PC-9 (cell line): ENCODE measurements at regions of chr18 and their contacts with region 1.

Region 1: GRCh38 chr18:70421471-70422390 is 132.9 kb downstream of the SOCS6 start:
- DNase-seq: peak; percentile 82 to 97
- H3K4me3 ChIP-seq: peak overlapping the region; percentile 45; the same call in 1 of the 2 replicates
- H3K27ac ChIP-seq: peak overlapping the region; percentile 99
- H3K4me1 ChIP-seq: peaks cover 68% of the 10 kb centered on the region
- H3K27me3 ChIP-seq: no peaks in the 10 kb centered on the region
- CTCF ChIP-seq: no peak

Region 2: DNA sequence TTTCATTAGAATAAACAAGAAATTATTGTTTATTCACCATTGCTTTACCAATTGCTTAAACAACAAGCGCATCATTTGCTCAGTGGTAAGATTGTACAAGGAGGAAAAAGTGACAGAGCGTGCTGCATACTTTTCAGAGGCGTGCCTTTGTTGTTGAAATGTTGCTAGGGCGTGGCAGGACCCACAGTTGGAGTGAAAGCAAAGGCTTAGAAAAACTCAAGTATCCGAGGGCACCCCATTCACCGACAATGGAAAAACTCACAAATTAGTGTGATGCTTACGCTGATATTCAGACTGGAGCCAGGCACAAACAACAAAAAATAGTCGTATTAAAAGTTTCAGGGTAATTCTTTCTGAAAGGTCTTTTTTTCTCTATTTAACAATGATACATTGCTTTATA is 178.6 kb before region 1 on chr18:
- CTCF ChIA-PET with region 1: no interaction called
- POLR2A ChIA-PET with region 1: no interaction called
- intact Hi-C with region 1: loop called (anchors 1 kb)
- DNase-seq: peak; percentile 65 to 89
- H3K4me3 ChIP-seq: peak overlapping the region; percentile 47
- H3K27ac ChIP-seq: peak overlapping the region; percentile 97
- H3K4me1 ChIP-seq: peaks cover 21% of the 10 kb centered on the region
- H3K27me3 ChIP-seq: no peaks in the 10 kb centered on the region
- CTCF ChIP-seq: no peak

Region 3: DNA sequence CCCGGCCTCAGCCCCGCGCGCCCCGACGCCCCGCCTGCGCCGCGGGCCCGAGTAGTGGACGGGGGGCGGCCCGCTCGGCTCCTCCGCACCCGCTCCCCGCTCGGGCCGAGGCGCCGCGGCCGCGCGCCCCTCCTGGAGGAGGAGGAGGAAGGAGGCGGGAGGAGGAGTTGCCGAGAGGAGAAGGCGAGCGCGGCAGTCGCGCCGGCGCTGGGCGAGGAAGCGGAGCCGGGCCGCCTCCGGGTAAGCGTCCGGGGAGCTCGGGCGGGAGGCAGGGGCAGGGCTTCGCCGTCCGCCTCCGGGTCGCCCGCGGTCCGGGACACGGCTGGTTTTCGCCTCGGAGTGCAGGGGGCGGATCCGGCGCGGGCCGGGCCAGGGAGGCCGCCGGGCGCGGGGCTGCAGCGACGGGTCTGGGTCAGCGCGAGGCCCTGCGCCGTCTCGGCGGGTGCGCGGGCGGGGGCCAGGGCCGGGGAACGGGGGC is 132.8 kb before region 1 on chr18 and contains the start of gene SOCS6:
- CTCF ChIA-PET with region 1: no interaction called
- POLR2A ChIA-PET with region 1: interaction called, 3 read pairs
- intact Hi-C with region 1: loop called (anchors 5 kb)
- DNase-seq: peak; percentile 53 to 58
- H3K4me3 ChIP-seq: peak within 1 kb of the TSS; percentile 94
- H3K27ac ChIP-seq: peak within 1 kb of the TSS; percentile 61
- H3K4me1 ChIP-seq: peaks cover 45% of the 10 kb centered on the region
- H3K27me3 ChIP-seq: no peaks in the 10 kb centered on the region
- CTCF ChIP-seq: no peak
- total RNA-seq, gene SOCS6: 20.9 and 21.0 TPM in 2 replicates

Region 4: DNA sequence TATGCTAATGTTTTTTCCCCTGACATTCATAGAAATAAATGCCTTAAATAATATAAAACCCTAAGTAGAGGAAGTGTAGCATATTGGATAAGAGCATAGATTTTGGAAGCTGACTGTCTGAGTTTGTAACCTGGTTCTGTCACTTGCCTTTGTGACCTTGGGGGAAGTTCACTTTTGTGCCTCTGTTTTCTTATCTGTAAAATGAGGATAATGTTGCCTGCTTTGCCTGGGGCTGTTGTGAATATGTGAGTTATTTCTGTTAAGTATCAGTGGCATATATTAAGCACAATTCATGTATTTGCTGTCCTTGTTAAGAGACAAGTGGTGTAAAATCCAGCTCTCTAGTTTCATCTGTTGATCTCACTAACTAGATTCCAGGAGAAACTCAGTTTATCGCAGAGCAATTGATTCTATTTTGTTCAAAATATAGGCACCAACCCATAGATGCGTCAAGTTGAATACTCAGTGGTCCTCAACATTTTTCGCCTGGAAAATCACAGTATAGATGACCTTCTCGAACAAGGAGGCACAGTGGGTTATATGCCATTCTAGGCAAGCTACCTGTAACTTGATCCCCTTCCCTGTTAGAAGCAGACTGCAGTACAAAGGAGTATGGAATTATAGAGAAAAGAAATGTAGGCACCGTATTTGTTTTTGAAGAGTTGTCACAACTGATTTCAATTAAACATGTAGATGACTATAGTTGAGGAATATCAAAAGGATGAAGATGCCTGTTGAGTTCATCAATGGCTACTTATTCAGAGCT is 65.9 kb before region 1 on chr18:
- CTCF ChIA-PET with region 1: no interaction called
- POLR2A ChIA-PET with region 1: interaction called, 3 read pairs
- intact Hi-C with region 1: loop called (anchors 1 kb)
- DNase-seq: no peak
- H3K4me3 ChIP-seq: no peak overlapping the region
- H3K27ac ChIP-seq: peak overlapping the region; percentile 94
- H3K4me1 ChIP-seq: peaks cover 43% of the 10 kb centered on the region
- H3K27me3 ChIP-seq: no peaks in the 10 kb centered on the region
- CTCF ChIP-seq: no peak

Region 5: GRCh38 chr18:70384181-70384790 is 37.4 kb before region 1 on chr18:
- CTCF ChIA-PET with region 1: no interaction called
- POLR2A ChIA-PET with region 1: no interaction called
- intact Hi-C with region 1: loop called (anchors 2 kb)
- DNase-seq: peak; percentile 76 to 97
- H3K4me3 ChIP-seq: peak overlapping the region; percentile 48; the same call in 1 of the 2 replicates
- H3K27ac ChIP-seq: peak overlapping the region; percentile 77
- H3K4me1 ChIP-seq: peaks cover 34% of the 10 kb centered on the region
- H3K27me3 ChIP-seq: no peaks in the 10 kb centered on the region
- CTCF ChIP-seq: no peak

Region 6: DNA sequence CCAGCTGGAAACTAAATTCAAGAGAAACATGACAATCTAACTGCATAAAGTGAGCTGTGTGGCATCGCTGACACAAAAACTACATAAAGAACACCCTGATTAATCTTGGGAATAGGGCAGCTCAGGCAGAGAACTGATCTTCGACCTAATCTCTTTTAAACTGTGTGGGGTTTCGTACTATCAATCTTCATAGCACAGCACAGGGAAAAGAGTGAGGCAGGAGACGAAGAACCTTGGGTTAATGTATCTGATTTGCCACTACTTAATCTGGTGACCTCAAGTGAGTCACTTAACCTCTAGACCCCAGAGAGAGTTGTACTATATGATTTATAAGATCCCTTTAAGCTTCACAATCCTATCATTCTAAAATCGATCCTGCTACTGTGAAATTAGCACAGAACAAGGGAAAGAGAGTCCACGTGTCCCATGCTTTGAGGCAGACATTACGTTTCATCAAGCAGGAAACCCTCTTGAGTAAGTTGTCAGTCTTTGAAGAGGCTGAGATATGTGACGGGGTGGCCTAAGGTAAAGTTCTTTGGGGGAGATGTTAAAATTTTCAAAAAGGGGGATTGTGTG is 386.8 kb after region 1 on chr18:
- CTCF ChIA-PET with region 1: no interaction called
- POLR2A ChIA-PET with region 1: no interaction called
- intact Hi-C with region 1: no loop called
- DNase-seq: no peak
- H3K4me3 ChIP-seq: no peak overlapping the region
- H3K27ac ChIP-seq: no peak overlapping the region
- H3K4me1 ChIP-seq: no peaks in the 10 kb centered on the region
- H3K27me3 ChIP-seq: no peaks in the 10 kb centered on the region
- CTCF ChIP-seq: no peak